Right ventricle myocardium inferior (tissue), 1 donor: ENCODE measurements at regions of chrX and their contacts with region 1.

Region 1: DNA sequence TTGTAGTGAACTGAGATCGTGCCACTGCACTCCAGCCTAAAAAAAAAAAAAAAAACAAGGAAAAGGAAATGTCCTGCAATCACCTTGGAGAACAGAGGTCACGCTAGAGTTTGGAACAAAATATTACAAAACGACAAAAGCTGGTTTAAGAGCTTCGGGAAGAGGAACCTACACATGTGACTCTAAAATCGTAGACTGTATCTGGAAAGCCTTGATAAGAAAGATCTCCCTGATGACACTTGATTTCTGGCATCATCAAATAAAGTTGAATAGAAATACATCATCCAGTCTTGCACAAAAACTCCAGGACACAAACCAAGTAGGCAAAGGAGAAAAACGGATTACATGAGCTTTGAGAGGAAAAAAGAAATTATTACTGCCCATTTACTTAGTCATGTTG is 31.1 kb upstream of the DOCK11 start:
- DNase-seq: no peak
- ATAC-seq: no peak

Region 2: DNA sequence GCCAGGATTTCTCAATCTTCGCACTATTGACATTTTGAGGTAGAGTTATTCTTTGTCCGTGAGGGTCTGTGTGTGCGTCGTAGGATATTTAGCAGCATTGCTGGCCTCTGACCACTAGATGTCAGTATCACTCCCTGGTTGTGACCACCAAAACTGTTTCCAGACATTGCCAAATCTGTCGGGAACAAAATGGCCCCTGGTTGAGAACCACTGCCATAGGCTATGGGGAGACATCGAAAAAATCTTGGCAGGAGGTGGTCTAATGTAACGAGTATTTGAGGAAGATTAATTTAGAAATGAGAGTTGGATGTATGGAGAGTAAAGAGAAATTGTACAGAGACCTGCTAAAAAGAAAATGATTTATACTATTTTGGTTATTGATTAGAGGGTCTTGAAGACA is 139.5 kb after region 1 on chrX:
- intact Hi-C with region 1: loop called (anchors 5 kb)
- DNase-seq: no peak
- ATAC-seq: peak; percentile 70